ENCODE measurements at regions of chr17 and their contacts with region 1.

Region 1: GRCh38 chr17:74748529-74749365 is at the start of gene NHERF1:
- DNase-seq: peak; percentile 92 to 96 (median 95)
- H3K4me3 ChIP-seq: peak within 1 kb of the TSS; percentile 59 to 96 (median 81)
- H3K27ac ChIP-seq: peak within 1 kb of the TSS; percentile 33 to 88 (median 80)
- H3K4me1 ChIP-seq: peaks cover 28 to 58% of the 10 kb centered on the region in 2 donors
- H3K27me3 ChIP-seq: no peaks in the 10 kb centered on the region
- CTCF ChIP-seq: peak in 4 of 6 experiments; percentile 4 to 32 (median 21)
- POLR2A ChIP-seq: peak; percentile 96 to 98
- total RNA-seq, gene NHERF1: 22.0 to 277 (median 211) TPM

Region 2: GRCh38 chr17:74770498-74771318 is 22.0 kb after region 1 on chr17:
- intact Hi-C with region 1: loop called in 1 of 2 experiments (anchors 2 kb)
- DNase-seq: peak; percentile 74 to 89 (median 79)
- H3K4me3 ChIP-seq: no peak overlapping the region
- H3K27ac ChIP-seq: peak overlapping the region in 3 of 5 donors; percentile 78 to 93 (median 87)
- H3K4me1 ChIP-seq: peaks cover 61 to 64% of the 10 kb centered on the region in 2 donors
- H3K27me3 ChIP-seq: no peaks in the 10 kb centered on the region
- CTCF ChIP-seq: peak; percentile 54 to 84 (median 80)
- POLR2A ChIP-seq: no peak

Region 3: GRCh38 chr17:74780443-74781238 is 31.9 kb after region 1 on chr17:
- intact Hi-C with region 1: loop called in 1 of 2 experiments (anchors 5 kb)
- DNase-seq: no peak
- H3K4me3 ChIP-seq: no peak overlapping the region
- H3K27ac ChIP-seq: peak overlapping the region in 1 of 5 donors; percentile 61
- H3K4me1 ChIP-seq: peaks cover 7 to 15% of the 10 kb centered on the region in 2 donors
- H3K27me3 ChIP-seq: no peaks in the 10 kb centered on the region
- CTCF ChIP-seq: peak in 3 of 6 experiments; percentile 17 to 31 (median 19)
- POLR2A ChIP-seq: no peak

Region 4: GRCh38 chr17:74864866-74865395 is 116.2 kb after region 1 on chr17:
- intact Hi-C with region 1: loop called (anchors 5 kb)
- DNase-seq: peak; percentile 77 to 93 (median 81)
- H3K4me3 ChIP-seq: no peak overlapping the region
- H3K27ac ChIP-seq: peak overlapping the region in 3 of 5 donors; percentile 40 to 64 (median 45)
- H3K4me1 ChIP-seq: peaks cover 37 to 76% of the 10 kb centered on the region in 2 donors
- H3K27me3 ChIP-seq: no peaks in the 10 kb centered on the region
- CTCF ChIP-seq: peak; percentile 92 to 98 (median 96)
- POLR2A ChIP-seq: no peak